MCF 10A (cell line): ENCODE measurements at regions of chr16 and their contacts with region 1.

Region 1: GRCh38 chr16:69132424-69133252 is at the starts of genes CHTF8 and UTP4:
- DNase-seq: peak; percentile 76
- H3K4me3 Mint-ChIP-seq: peak within 1 kb of the TSS; percentile 87
- H3K27ac Mint-ChIP-seq: peak within 1 kb of the TSS; percentile 87
- H3K4me1 Mint-ChIP-seq: peaks cover 20% of the 10 kb centered on the region
- H3K27me3 Mint-ChIP-seq: no peaks in the 10 kb centered on the region
- CTCF ChIP-seq: no peak
- total RNA-seq, gene CHTF8: 107 and 113 TPM in 2 replicates
- total RNA-seq, gene UTP4: 77.1 and 97.1 TPM in 2 replicates

Region 2: DNA sequence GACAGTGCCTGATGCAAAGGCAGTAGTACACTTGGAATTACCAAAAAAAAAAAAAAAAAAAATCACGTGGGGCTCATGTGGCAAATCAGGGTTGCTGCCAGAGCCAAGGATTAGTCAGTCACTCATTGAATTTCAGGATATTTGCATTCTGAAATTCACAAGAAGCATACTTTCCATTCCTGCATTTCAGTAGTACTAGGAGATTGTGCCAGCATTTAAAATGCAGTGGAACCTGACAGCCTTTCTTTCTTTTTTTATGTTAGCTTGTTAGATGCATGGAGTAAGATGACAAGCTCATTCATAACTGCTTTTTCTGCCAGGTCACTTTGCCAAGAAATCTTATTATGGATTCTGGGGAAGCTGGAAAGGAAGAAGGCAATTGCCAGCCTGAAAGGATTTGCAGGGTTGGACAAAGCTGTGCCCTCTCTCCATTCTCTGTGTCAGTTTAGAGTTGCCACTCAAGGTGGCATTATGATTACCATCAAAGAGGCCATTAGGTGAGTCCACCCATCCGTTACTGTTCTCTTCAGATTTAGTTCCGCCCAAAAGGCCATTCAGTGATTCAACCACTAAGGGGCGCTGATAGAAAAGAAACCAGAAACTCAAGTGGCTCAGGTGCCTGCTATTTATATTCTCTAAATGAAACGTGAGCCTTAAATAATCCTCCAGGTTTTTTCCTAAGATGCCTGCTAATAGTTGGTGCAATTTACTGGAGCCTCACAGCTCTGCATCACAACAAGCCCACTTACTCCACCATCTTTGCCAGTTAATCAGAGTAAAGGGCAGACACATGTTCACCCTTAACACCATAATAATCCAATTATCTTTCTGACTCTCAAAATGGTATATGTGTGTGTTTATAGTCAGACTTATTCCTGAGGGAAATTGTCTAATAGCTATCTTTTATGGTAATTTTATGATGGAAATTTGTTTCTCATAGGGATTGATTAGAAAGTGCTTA is 230.3 kb before region 1 on chr16:
- CTCF ChIA-PET with region 1: interaction called, 12 read pairs
- POLR2A ChIA-PET with region 1: interaction called, 5 read pairs
- intact Hi-C with region 1: no loop called
- DNase-seq: peak; percentile 81
- H3K4me3 Mint-ChIP-seq: no peak overlapping the region
- H3K27ac Mint-ChIP-seq: no peak overlapping the region
- H3K4me1 Mint-ChIP-seq: no peaks in the 10 kb centered on the region
- H3K27me3 Mint-ChIP-seq: no peaks in the 10 kb centered on the region
- CTCF ChIP-seq: peak; percentile 76

Region 3: DNA sequence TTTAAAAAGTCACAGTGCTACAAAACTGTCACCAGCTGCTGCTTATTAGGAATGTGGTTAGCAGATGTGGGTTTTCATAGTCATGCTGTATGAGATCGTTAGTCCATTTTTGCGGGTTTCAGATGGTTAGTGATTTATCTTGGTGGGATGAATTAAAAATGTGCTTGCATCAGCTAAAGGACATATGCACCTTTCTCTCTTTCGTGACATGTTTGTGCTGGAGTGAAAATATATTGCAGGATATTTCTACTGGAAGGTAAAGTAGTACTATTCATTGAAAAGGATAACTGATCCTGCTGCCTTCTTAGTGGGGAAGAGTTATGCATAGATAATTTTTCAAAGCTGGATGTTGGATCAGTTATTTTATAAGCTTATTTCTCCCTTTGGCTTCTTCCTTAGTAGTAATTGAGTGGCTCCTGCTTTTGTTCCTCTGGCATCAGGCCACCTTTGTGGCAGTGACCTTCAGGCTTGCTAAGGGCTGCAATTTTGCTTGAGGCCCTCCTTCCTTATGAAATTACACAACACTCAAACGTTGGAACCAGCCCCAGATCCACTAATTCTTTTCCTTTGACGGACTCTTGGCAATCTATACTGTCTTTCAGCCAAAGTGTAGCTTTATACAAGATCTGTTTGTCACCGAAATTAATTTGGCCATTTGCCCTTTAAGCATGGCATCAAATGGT is 46.8 kb after region 1 on chr16:
- CTCF ChIA-PET with region 1: no interaction called
- POLR2A ChIA-PET with region 1: interaction called, 10 read pairs
- intact Hi-C with region 1: no loop called
- DNase-seq: peak; percentile 96
- H3K4me3 Mint-ChIP-seq: peak overlapping the region; percentile 11
- H3K27ac Mint-ChIP-seq: peak overlapping the region; percentile 56
- H3K4me1 Mint-ChIP-seq: peaks cover 23% of the 10 kb centered on the region
- H3K27me3 Mint-ChIP-seq: no peaks in the 10 kb centered on the region
- CTCF ChIP-seq: no peak